Transverse colon (tissue), 4 donors: ENCODE measurements at regions of chr16 and their contacts with region 1.

Region 1: GRCh38 chr16:84380405-84380804 is 12.1 kb downstream of the ATP2C2 start:
- DNase-seq: no peak
- H3K4me3 ChIP-seq: no peak overlapping the region
- H3K27ac ChIP-seq: peak overlapping the region in 1 of 4 donors; percentile 7
- H3K4me1 ChIP-seq: peaks cover 0 to 5% (median 0%) of the 10 kb centered on the region in 4 donors
- H3K27me3 ChIP-seq: no peaks in the 10 kb centered on the region
- CTCF ChIP-seq: no peak
- EP300 ChIP-seq: no peak
- POLR2A ChIP-seq: no peak

Region 2: DNA sequence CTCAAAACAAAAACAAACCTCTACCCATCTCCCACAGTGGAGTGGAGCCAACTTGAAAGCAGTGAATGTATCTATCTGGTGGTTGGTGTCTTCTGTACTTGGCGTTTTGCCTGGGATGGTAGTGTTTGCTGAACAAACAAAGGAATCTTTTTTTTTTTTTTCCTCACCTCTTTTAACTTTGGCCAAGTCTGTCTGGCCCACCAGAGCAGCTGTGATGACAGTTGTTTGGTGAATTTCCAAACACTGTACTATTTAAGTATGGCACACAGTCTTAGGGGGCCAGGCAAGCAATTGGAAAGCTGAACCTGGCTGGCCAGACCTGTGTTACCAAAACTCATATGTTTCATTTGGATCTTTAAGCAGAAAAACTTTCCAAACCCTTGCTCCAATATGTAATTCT is 1855.4 kb before region 1 on chr16:
- in situ Hi-C with region 1: no loop called
- intact Hi-C with region 1: loop called (anchors 5 kb)
- DNase-seq: no peak
- H3K4me3 ChIP-seq: no peak overlapping the region
- H3K27ac ChIP-seq: no peak overlapping the region
- H3K4me1 ChIP-seq: no peaks in the 10 kb centered on the region
- H3K27me3 ChIP-seq: no peaks in the 10 kb centered on the region
- CTCF ChIP-seq: no peak
- EP300 ChIP-seq: no peak
- POLR2A ChIP-seq: no peak

Region 3: DNA sequence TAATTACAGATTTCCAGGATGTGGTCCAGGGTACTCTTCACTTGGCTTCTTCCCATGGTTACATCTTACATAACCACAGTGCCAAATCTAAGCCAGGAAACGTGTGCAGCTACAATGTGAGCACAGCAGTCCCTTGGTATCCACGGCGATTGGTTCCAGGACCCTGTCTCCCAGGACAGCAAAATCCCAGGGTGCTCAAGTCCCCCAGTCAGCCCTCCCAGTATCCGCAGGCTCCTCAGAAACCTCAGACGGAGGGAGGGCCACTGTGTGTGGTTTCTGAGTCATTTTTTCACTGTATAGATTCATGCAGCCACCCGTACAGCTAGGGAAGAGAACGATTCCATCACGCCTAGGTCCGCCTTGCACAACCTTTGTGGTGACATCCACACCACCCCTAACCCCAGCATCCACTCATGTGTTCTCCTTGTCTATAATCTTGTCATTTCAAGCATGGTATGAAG is 23.2 kb before region 1 on chr16:
- in situ Hi-C with region 1: no loop called
- intact Hi-C with region 1: no loop called
- DNase-seq: no peak
- H3K4me3 ChIP-seq: no peak overlapping the region
- H3K27ac ChIP-seq: peak overlapping the region in 2 of 4 donors; percentile 36 to 75
- H3K4me1 ChIP-seq: peaks cover 5 to 32% (median 18%) of the 10 kb centered on the region in 4 donors
- H3K27me3 ChIP-seq: no peaks in the 10 kb centered on the region
- CTCF ChIP-seq: no peak
- EP300 ChIP-seq: no peak
- POLR2A ChIP-seq: no peak

Region 4: DNA sequence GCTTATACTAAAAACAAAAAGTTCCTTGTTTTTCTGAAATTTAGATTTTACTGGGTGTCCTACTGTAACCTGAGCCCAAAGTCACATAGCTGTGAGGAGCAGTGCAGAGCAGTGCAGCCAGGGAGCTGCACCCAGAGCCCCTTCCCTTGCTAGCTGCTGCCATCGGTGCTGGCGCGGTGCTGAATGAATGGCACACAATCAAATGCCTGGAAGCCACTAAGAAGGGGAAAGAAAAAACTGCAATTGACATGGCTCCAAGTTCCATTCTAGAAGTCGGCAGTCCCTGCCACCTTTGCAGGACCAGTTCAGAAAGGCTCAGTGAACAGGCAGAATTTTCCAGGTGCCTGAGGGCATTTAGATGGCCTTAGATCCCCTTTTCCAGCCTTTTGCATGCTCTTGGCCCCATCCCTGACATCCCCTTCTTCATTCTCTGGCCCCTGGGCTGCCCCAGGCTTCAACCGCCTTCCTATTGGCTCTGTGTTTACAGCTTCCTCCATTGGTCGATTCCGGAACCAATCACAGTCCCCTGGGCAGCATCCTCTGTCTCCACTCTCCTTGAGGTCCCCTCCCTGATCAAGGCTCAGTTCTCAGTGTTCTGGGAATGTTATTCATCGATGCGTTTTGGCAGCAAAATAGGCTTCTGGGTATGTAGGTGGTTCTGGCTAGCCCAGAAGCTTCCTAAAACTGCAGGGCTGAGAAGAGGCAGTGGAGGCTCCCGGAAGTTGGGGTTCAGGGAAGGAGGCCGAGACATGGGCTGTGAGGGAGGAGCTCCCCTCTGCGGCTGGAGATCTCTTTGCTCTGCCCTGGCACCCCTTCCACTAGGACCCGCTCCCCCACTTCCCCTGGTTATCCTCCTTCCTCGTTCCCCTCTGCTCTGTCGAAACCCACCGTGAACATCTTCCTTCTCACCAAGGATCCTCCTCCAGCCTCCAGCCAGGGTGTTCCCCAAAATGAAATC is 25.9 kb after region 1 on chr16:
- in situ Hi-C with region 1: no loop called
- intact Hi-C with region 1: no loop called
- DNase-seq: no peak
- H3K4me3 ChIP-seq: no peak overlapping the region
- H3K27ac ChIP-seq: no peak overlapping the region
- H3K4me1 ChIP-seq: no peaks in the 10 kb centered on the region
- H3K27me3 ChIP-seq: peaks cover 13% of the 10 kb centered on the region
- CTCF ChIP-seq: no peak
- EP300 ChIP-seq: no peak
- POLR2A ChIP-seq: no peak

Region 5: DNA sequence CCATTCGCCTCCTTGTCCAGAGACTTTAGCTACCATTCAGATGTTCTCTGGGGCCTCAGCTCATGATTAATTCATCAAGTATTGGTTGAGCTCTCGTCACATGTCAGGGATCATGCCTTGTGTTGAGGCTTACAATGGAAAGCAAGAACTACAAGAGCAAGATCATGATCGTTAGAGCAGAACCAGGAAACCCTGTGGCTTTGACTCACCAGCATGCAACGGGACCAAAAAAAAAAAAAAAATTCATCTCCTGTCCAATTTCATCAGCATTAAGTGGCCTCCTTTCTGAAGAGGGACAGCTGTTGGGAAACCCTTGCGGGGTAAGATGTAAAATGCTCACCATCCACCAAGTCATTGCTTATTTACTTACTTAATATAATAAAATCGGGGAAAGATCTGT is 307.3 kb after region 1 on chr16:
- in situ Hi-C with region 1: no loop called
- intact Hi-C with region 1: no loop called
- DNase-seq: no peak
- H3K4me3 ChIP-seq: no peak overlapping the region
- H3K27ac ChIP-seq: no peak overlapping the region
- H3K4me1 ChIP-seq: no peaks in the 10 kb centered on the region
- H3K27me3 ChIP-seq: no peaks in the 10 kb centered on the region
- CTCF ChIP-seq: no peak
- EP300 ChIP-seq: no peak
- POLR2A ChIP-seq: no peak